ENCODE measurements at regions of chr2 and their contacts with region 1.

Region 1: DNA sequence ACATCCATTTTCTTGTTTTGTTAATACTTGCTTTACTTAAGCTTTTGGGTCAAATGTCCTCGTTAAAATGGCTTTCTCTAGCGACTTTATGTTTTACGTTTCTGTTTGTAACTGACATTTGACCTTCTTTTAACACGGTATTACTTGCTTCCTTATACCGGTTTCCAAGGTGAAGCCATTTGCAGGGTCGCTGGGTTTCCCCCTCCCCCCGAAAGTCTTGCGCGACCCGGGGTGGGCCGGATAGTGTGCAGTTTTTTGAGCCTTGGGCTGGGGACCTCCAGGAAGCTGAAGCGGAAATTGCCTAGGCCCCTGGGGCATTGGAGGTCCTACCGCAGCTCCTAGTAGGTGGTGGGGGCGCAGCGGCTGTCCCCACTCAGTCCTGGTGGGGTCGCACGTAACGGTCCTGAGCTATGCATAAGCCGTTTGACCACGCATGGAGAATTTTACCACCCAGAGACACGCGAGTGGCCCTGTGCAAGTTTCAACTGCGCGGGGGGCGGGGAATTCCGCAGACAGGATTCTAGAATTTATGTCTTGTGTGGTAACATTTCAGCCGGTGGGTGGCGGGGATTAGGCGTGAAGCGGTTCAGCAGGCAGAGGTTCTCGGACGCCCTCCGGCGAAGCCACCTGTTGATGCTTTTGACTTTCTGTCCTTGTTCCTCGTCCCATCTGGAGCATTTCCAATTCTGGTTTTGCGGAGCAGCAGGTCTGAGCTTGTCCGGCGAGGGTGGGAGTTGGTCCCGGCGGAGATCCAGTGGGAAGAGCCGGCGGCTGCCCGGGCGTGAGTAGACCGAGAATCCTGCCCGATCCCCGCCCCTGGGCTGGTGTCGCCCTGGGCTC is 2.4 kb downstream of the CFLAR start:
- DNase-seq: peak; percentile 68 to 90 (median 78)
- ATAC-seq: peak; percentile 55 to 60
- H3K4me3 Mint-ChIP-seq: peak overlapping the region; percentile 89 to 100 (median 98)
- H3K27ac Mint-ChIP-seq: peak overlapping the region; percentile 97 to 100 (median 99)
- H3K4me1 Mint-ChIP-seq: peaks cover 38 to 79% (median 63%) of the 10 kb centered on the region in 4 donors
- H3K27me3 Mint-ChIP-seq: no peaks in the 10 kb centered on the region

Region 2: DNA sequence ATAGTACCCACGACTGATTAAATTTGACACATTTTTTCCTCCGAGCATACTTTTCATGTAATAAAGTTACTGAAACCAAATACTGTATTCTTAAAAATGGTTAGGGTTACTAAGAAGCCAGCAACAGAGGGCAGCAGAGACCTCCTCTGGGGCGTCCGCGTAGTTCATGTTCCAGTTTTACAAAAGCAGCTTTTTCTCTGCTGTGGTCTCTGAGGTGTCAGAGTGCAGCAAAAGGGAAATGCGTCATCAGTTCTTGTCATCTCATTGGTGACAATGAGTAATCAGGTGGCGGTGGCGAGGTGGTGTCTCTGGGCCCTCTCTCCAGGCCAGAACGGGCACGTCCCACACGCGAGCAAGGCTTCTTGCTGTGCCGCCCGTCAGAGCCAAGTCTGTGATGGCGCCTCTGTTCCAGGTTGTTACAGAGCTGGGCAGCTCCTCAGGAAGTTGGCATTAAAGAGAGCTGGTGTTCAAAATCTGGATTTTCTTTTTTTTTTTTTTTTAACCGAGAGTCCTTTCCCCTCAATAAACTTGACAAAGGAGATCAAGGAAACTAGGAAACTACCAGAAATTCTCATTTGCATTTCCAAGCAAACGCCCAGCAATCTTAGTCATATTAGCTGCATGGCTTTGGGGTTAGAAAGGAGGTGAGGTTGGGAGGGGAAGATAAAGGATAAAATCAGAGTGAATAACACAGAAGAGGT is 405.2 kb before region 1 on chr2:
- POLR2A ChIA-PET with region 1: interaction called, 14 read pairs
- DNase-seq: peak; percentile 74 to 97 (median 90)
- ATAC-seq: peak; percentile 98 to 99
- H3K4me3 Mint-ChIP-seq: peak overlapping the region; percentile 75 to 90 (median 84)
- H3K27ac Mint-ChIP-seq: peak overlapping the region; percentile 98 to 100 (median 99)
- H3K4me1 Mint-ChIP-seq: peaks cover 2 to 18% (median 10%) of the 10 kb centered on the region in 4 donors
- H3K27me3 Mint-ChIP-seq: peaks cover 0 to 1% (median 0%) of the 10 kb centered on the region in 5 donors

Region 3: GRCh38 chr2:200864176-200864976 is 254.0 kb before region 1 on chr2 and contains the start of gene CLK1:
- POLR2A ChIA-PET with region 1: interaction called, 66 read pairs
- DNase-seq: peak; percentile 92 to 98 (median 96)
- ATAC-seq: peak; percentile 75 to 76
- H3K4me3 Mint-ChIP-seq: peak within 1 kb of the TSS; percentile 85 to 100 (median 95)
- H3K27ac Mint-ChIP-seq: peak within 1 kb of the TSS; percentile 90 to 100 (median 99)
- H3K4me1 Mint-ChIP-seq: peaks cover 23 to 53% (median 45%) of the 10 kb centered on the region in 4 donors
- H3K27me3 Mint-ChIP-seq: no peaks in the 10 kb centered on the region
- polyA plus RNA-seq, gene CLK1: 13.6 to 45.3 (median 15.5) TPM

Region 4: DNA sequence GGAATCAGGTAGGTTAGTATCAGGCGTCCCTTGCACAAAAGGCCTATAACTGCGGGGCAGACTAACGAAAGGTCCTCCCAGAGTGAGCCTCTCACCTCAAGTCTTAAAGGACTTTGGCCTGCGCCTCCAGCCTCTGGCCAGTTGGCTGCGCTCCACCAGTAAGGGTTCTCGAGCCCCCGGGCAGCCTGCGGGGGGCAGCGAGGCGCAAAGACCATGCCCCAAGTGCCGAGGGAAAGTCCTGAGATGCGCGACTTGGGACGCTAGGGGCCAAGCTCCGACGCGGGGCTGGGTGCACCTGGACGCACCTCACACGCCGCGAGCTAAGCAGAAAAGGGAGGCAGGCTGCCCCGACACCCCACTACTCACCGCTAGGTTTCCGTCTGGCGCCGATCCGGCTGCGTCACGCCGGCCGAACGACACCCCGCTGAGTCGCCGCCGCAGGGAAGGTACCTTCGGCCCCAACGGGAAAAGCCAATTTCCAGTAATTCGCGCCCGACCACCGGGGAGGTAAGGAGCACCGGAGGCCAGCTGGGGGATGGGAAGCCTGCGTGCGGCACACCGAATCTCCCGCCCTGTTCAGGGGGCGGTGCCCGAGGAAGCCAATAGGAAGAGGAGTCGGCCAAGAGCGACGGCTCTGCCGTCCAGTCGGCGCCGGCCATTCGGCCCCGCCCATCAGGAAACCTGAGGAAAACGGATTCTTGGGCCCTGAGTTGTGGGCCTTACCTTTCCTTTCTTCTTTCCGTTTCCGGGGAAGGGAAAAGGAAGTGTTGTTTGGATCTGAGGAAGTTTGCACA is 155.0 kb before region 1 on chr2 and contains the start of gene ORC2:
- POLR2A ChIA-PET with region 1: interaction called, 39 read pairs
- DNase-seq: peak; percentile 85 to 99 (median 92)
- ATAC-seq: peak; percentile 93 to 94
- H3K4me3 Mint-ChIP-seq: peak within 1 kb of the TSS; percentile 95 to 99 (median 98)
- H3K27ac Mint-ChIP-seq: peak within 1 kb of the TSS; percentile 95 to 100 (median 99)
- H3K4me1 Mint-ChIP-seq: peaks cover 35 to 67% (median 60%) of the 10 kb centered on the region in 4 donors
- H3K27me3 Mint-ChIP-seq: no peaks in the 10 kb centered on the region
- polyA plus RNA-seq, gene ORC2: 9.4 to 11.1 (median 9.4) TPM

Region 5: GRCh38 chr2:201152999-201153815 is 34.9 kb after region 1 on chr2:
- POLR2A ChIA-PET with region 1: interaction called, 65 read pairs
- DNase-seq: no peak
- ATAC-seq: no peak
- H3K4me3 Mint-ChIP-seq: no peak overlapping the region
- H3K27ac Mint-ChIP-seq: peak overlapping the region; percentile 10 to 83 (median 34)
- H3K4me1 Mint-ChIP-seq: peaks cover 12 to 79% (median 20%) of the 10 kb centered on the region in 4 donors
- H3K27me3 Mint-ChIP-seq: no peaks in the 10 kb centered on the region

Region 6: GRCh38 chr2:201182650-201183364 is 64.5 kb after region 1 on chr2 and contains the start of gene CASP10:
- POLR2A ChIA-PET with region 1: interaction called, 19 read pairs
- DNase-seq: peak in 6 of 10 donors; percentile 6 to 80 (median 50)
- ATAC-seq: peak; percentile 83 to 87
- H3K4me3 Mint-ChIP-seq: peak within 1 kb of the TSS; percentile 94 to 99 (median 98)
- H3K27ac Mint-ChIP-seq: peak within 1 kb of the TSS; percentile 85 to 97 (median 96)
- H3K4me1 Mint-ChIP-seq: peaks cover 15 to 47% (median 37%) of the 10 kb centered on the region in 4 donors
- H3K27me3 Mint-ChIP-seq: no peaks in the 10 kb centered on the region
- polyA plus RNA-seq, gene CASP10: 8.6 to 17.5 (median 14.6) TPM

Region 7: DNA sequence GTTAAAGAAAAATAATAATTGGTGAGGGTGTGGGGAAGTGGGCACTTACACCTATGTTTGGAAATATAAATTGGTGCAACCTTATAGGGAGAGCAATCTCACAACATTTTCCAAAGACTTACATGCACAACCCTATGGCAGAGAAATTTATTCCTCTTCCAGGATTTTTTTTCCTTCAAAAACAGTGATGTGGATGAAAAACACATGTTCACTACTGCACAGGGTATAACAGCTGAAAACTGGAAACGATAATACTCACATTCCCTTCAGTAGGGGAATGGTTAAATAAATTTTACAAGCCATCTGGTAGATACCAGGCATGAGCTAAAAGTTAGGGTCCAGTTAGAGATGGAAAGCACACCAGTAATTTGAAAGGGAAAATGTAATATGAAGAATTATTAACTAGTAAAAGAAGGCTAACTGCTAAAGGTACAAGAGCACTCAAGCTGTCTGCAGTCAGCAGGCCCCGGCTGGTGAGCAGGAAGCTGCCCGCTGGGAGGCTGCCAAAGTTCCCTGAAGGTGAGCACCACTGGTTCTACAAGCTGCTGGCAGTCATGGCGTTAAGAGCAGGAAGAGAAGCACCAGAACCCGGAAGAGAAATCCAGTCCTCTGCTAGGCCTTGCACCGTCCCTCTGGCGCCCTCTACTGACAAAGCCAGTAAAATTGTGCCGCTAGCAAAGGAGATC is 113.6 kb after region 1 on chr2:
- POLR2A ChIA-PET with region 1: interaction called, 54 read pairs
- DNase-seq: peak; percentile 82 to 95 (median 90)
- ATAC-seq: peak; percentile 49 to 56
- H3K4me3 Mint-ChIP-seq: peak overlapping the region; percentile 44 to 99 (median 93)
- H3K27ac Mint-ChIP-seq: peak overlapping the region; percentile 60 to 98 (median 89)
- H3K4me1 Mint-ChIP-seq: peaks cover 14 to 70% (median 43%) of the 10 kb centered on the region in 4 donors
- H3K27me3 Mint-ChIP-seq: no peaks in the 10 kb centered on the region

Measured in naive thymus-derived CD8-positive, alpha-beta T cell (primary cell).